ENCODE measurements at regions of chr2 and their contacts with region 1.

Region 1: GRCh38 chr2:231662028-231662810 is 46.1 kb upstream of the PTMA start:
- DNase-seq: peak; percentile 92 to 99 (median 97)
- ATAC-seq: peak; percentile 89
- H3K4me3 ChIP-seq: peak overlapping the region; percentile 57
- H3K4me3 Mint-ChIP-seq: peak overlapping the region; percentile 73
- H3K27ac ChIP-seq: peak overlapping the region; percentile 80 to 96
- H3K27ac Mint-ChIP-seq: peak overlapping the region; percentile 94
- H3K4me1 ChIP-seq: peaks cover 35% of the 10 kb centered on the region
- H3K4me1 Mint-ChIP-seq: peaks cover 17% of the 10 kb centered on the region
- H3K27me3 ChIP-seq: no peaks in the 10 kb centered on the region
- H3K27me3 Mint-ChIP-seq: no peaks in the 10 kb centered on the region
- CTCF ChIP-seq: no peak

Region 2: GRCh38 chr2:230318190-230319121 is 1343.8 kb before region 1 on chr2:
- CTCF ChIA-PET with region 1: no interaction called
- POLR2A ChIA-PET with region 1: no interaction called
- intact Hi-C with region 1: no loop called
- DNase-seq: peak in 2 of 14 experiments; percentile 37 to 42
- ATAC-seq: peak; percentile 14
- H3K4me3 ChIP-seq: peak overlapping the region; percentile 24
- H3K4me3 Mint-ChIP-seq: peak overlapping the region; percentile 72
- H3K27ac ChIP-seq: peak overlapping the region; percentile 62 to 69
- H3K27ac Mint-ChIP-seq: peak overlapping the region; percentile 87
- H3K4me1 ChIP-seq: peaks cover 61% of the 10 kb centered on the region
- H3K4me1 Mint-ChIP-seq: peaks cover 84% of the 10 kb centered on the region
- H3K27me3 ChIP-seq: no peaks in the 10 kb centered on the region
- H3K27me3 Mint-ChIP-seq: no peaks in the 10 kb centered on the region
- CTCF ChIP-seq: no peak

Region 3: GRCh38 chr2:231514103-231514950 is 147.9 kb before region 1 on chr2:
- CTCF ChIA-PET with region 1: no interaction called
- POLR2A ChIA-PET with region 1: no interaction called
- intact Hi-C with region 1: loop called in 1 of 2 experiments (anchors 5 kb)
- DNase-seq: peak; percentile 96 to 99 (median 98)
- ATAC-seq: peak; percentile 96
- H3K4me3 ChIP-seq: peak overlapping the region; percentile 78
- H3K4me3 Mint-ChIP-seq: peak overlapping the region; percentile 91
- H3K27ac ChIP-seq: peak overlapping the region; percentile 87 to 95
- H3K27ac Mint-ChIP-seq: peak overlapping the region; percentile 94
- H3K4me1 ChIP-seq: peaks cover 12% of the 10 kb centered on the region
- H3K4me1 Mint-ChIP-seq: peaks cover 24% of the 10 kb centered on the region
- H3K27me3 ChIP-seq: no peaks in the 10 kb centered on the region
- H3K27me3 Mint-ChIP-seq: no peaks in the 10 kb centered on the region
- CTCF ChIP-seq: no peak

Region 4: GRCh38 chr2:231612179-231613053 is 49.8 kb before region 1 on chr2:
- CTCF ChIA-PET with region 1: no interaction called
- POLR2A ChIA-PET with region 1: interaction called, 21 read pairs
- intact Hi-C with region 1: loop called (anchors 2 to 5 kb)
- DNase-seq: peak; percentile 79 to 93 (median 86)
- ATAC-seq: peak; percentile 78
- H3K4me3 ChIP-seq: peak overlapping the region; percentile 59
- H3K4me3 Mint-ChIP-seq: peak overlapping the region; percentile 90
- H3K27ac ChIP-seq: no peak overlapping the region
- H3K27ac Mint-ChIP-seq: peak overlapping the region; percentile 74
- H3K4me1 ChIP-seq: peaks cover 34% of the 10 kb centered on the region
- H3K4me1 Mint-ChIP-seq: peaks cover 47% of the 10 kb centered on the region
- H3K27me3 ChIP-seq: no peaks in the 10 kb centered on the region
- H3K27me3 Mint-ChIP-seq: no peaks in the 10 kb centered on the region
- CTCF ChIP-seq: peak; percentile 89

Region 5: GRCh38 chr2:231786177-231786916 is 124.1 kb after region 1 on chr2 and contains the start of gene COPS7B:
- CTCF ChIA-PET with region 1: no interaction called
- POLR2A ChIA-PET with region 1: interaction called, 4 read pairs
- intact Hi-C with region 1: loop called (anchors 2 to 5 kb)
- DNase-seq: peak; percentile 65 to 90 (median 74)
- ATAC-seq: peak; percentile 63
- H3K4me3 ChIP-seq: peak within 1 kb of the TSS; percentile 73
- H3K4me3 Mint-ChIP-seq: peak within 1 kb of the TSS; percentile 90
- H3K27ac ChIP-seq: peak within 1 kb of the TSS; percentile 52 to 55
- H3K27ac Mint-ChIP-seq: peak within 1 kb of the TSS; percentile 82
- H3K4me1 ChIP-seq: peaks cover 40% of the 10 kb centered on the region
- H3K4me1 Mint-ChIP-seq: peaks cover 73% of the 10 kb centered on the region
- H3K27me3 ChIP-seq: no peaks in the 10 kb centered on the region
- H3K27me3 Mint-ChIP-seq: no peaks in the 10 kb centered on the region
- CTCF ChIP-seq: peak; percentile 38
- total RNA-seq, gene COPS7B: 27.6 to 29.9 TPM

Measured in CD4-positive, alpha-beta T cell (primary cell).